ENCODE measurements at regions of chrX and their contacts with region 1.

Region 1: DNA sequence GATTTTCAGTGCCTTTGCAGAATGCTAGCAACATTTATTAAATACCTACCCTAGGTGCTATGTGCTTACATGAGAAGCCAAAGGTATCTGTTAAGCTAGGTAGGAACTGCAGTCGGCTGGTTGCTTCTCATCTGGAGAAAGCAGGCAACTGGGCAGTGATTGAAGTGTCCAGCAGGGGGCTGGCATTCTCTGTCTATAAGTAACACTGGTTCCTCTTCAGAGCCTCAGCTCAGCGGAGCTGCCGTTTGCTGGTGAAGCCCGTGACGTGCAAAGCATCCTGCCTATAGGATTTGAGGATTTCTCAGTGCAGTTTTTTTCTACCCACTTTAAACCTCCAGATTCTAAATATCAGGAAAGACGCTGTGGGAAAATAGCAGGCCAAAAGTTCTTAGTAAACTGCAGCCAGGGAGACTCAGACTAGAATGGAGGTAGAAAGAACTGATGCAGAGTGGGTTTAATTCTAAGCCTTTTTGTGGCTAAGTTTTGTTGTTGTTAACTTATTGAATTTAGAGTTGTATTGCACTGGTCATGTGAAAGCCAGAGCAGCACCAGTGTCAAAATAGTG is at the start of gene GRPR:
- DNase-seq: peak; percentile 88
- H3K4me3 Mint-ChIP-seq: no peak within 1 kb of the TSS
- H3K27ac Mint-ChIP-seq: no peak within 1 kb of the TSS
- H3K4me1 Mint-ChIP-seq: no peaks in the 10 kb centered on the region
- H3K27me3 Mint-ChIP-seq: peaks cover 69% of the 10 kb centered on the region
- CTCF ChIP-seq: peak; percentile 73
- total RNA-seq, gene GRPR: not detected in 2 replicates

Region 2: GRCh38 chrX:15930585-15930984 is 192.7 kb before region 1 on chrX:
- CTCF ChIA-PET with region 1: interaction called, 6 read pairs
- POLR2A ChIA-PET with region 1: no interaction called
- intact Hi-C with region 1: loop called (anchors 1 kb)
- DNase-seq: peak; percentile 54
- H3K4me3 Mint-ChIP-seq: no peak overlapping the region
- H3K27ac Mint-ChIP-seq: no peak overlapping the region
- H3K4me1 Mint-ChIP-seq: no peaks in the 10 kb centered on the region
- H3K27me3 Mint-ChIP-seq: peaks cover 81% of the 10 kb centered on the region
- CTCF ChIP-seq: peak; percentile 41

Region 3: GRCh38 chrX:16212436-16212835 is 89.1 kb after region 1 on chrX:
- CTCF ChIA-PET with region 1: interaction called, 4 read pairs
- POLR2A ChIA-PET with region 1: no interaction called
- intact Hi-C with region 1: loop called (anchors 5 kb)
- DNase-seq: peak; percentile 25
- H3K4me3 Mint-ChIP-seq: no peak overlapping the region
- H3K27ac Mint-ChIP-seq: no peak overlapping the region
- H3K4me1 Mint-ChIP-seq: peaks cover 5% of the 10 kb centered on the region
- H3K27me3 Mint-ChIP-seq: peaks cover 13% of the 10 kb centered on the region
- CTCF ChIP-seq: peak; percentile 34

Region 4: GRCh38 chrX:16445166-16445752 is 322.0 kb after region 1 on chrX:
- CTCF ChIA-PET with region 1: interaction called, 6 read pairs
- POLR2A ChIA-PET with region 1: no interaction called
- intact Hi-C with region 1: loop called (anchors 2 kb)
- DNase-seq: peak; percentile 70
- H3K4me3 Mint-ChIP-seq: no peak overlapping the region
- H3K27ac Mint-ChIP-seq: no peak overlapping the region
- H3K4me1 Mint-ChIP-seq: no peaks in the 10 kb centered on the region
- H3K27me3 Mint-ChIP-seq: peaks cover 45% of the 10 kb centered on the region
- CTCF ChIP-seq: peak; percentile 84

Region 5: GRCh38 chrX:16670998-16671397 is 547.7 kb after region 1 on chrX:
- CTCF ChIA-PET with region 1: interaction called, 5 read pairs
- POLR2A ChIA-PET with region 1: no interaction called
- intact Hi-C with region 1: loop called (anchors 1 kb)
- DNase-seq: peak; percentile 57
- H3K4me3 Mint-ChIP-seq: no peak overlapping the region
- H3K27ac Mint-ChIP-seq: no peak overlapping the region
- H3K4me1 Mint-ChIP-seq: no peaks in the 10 kb centered on the region
- H3K27me3 Mint-ChIP-seq: peaks cover 23% of the 10 kb centered on the region
- CTCF ChIP-seq: peak; percentile 45